ENCODE measurements at regions of chrX and their contacts with region 1.

Region 1: DNA sequence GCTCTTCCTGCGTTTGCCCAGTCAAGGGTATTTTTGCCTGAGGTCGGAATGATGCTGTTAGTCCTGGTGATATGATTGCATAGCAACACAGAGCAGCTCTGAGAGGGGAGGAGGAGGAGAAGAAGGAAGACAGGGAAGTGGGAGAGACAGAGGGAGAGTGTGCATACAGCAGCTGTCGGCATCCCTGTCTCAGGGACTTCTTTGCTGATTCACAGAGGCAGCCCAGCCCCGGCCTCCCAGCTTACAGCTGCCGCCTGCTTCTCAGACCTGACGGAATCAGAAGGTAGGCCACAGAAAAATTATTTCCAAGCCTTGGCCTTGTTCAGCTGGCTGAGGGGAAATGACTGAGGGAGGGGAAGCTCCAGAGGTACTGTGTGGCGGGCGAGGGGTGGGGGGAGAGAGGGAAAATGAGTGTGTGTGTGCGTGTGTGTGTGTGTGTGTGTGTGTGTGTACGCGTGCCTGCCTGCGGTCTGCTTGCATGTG is 319 bp downstream of the DRP2 start:
- DNase-seq: no peak
- H3K4me3 ChIP-seq: no peak overlapping the region
- H3K27ac ChIP-seq: no peak overlapping the region
- H3K4me1 ChIP-seq: no peaks in the 10 kb centered on the region
- H3K27me3 ChIP-seq: peaks cover 4% of the 10 kb centered on the region
- CTCF ChIP-seq: no peak

Region 2: DNA sequence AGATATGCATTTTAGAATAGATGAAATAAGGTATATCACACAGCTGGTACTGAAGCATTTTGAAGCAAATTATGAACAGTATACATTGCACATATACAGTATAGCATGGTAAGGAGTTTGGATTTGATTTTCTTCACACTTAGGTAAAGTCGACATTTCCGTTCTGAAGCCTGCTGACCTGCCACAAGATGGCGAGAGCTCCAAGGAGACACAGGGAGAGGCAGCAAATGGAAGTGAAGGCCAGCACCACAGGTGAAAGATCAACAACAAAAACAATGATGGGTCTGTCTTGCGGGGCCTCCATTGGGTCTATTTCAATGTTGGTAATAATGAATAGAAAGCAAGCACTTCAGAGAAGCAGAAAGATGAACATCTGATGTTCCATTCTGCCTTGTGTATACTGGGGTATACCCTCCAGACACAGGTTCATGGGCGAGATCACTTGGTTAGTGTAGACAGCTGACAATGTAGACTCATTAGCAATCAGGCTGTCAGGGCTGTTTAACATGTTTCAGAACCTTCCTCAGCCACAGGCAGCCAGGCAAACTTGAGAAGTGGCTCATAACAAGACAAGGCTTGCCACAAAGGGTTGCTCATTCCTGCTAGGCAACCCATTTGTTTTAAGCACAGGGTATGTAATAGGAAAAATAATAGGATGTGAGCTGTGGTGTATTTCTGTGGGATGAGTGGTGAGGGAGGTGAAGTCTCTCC is 324.4 kb before region 1 on chrX:
- CTCF ChIA-PET with region 1: no interaction called
- dilution Hi-C with region 1: no loop called
- in situ Hi-C with region 1: no loop called
- intact Hi-C with region 1: no loop called
- DNase-seq: peak; percentile 93
- H3K4me3 ChIP-seq: no peak overlapping the region
- H3K27ac ChIP-seq: peak overlapping the region; percentile 74
- H3K4me1 ChIP-seq: peaks cover 17% of the 10 kb centered on the region
- H3K27me3 ChIP-seq: peaks cover 2% of the 10 kb centered on the region
- CTCF ChIP-seq: peak; percentile 44 to 70

Region 3: GRCh38 chrX:101276238-101276637 is 56.3 kb after region 1 on chrX:
- CTCF ChIA-PET with region 1: no interaction called
- dilution Hi-C with region 1: no loop called
- in situ Hi-C with region 1: no loop called
- intact Hi-C with region 1: no loop called
- DNase-seq: no peak
- H3K4me3 ChIP-seq: no peak overlapping the region
- H3K27ac ChIP-seq: no peak overlapping the region
- H3K4me1 ChIP-seq: no peaks in the 10 kb centered on the region
- H3K27me3 ChIP-seq: no peaks in the 10 kb centered on the region
- CTCF ChIP-seq: no peak

Region 4: GRCh38 chrX:101485199-101485949 is 265.5 kb after region 1 on chrX and contains the start of gene ARMCX4:
- CTCF ChIA-PET with region 1: interaction called, 12 read pairs
- dilution Hi-C with region 1: no loop called
- in situ Hi-C with region 1: no loop called
- intact Hi-C with region 1: no loop called
- DNase-seq: peak; percentile 18
- H3K4me3 ChIP-seq: peak within 1 kb of the TSS in 2 of 3 experiments; percentile 31 to 32
- H3K27ac ChIP-seq: no peak within 1 kb of the TSS
- H3K4me1 ChIP-seq: no peaks in the 10 kb centered on the region
- H3K27me3 ChIP-seq: no peaks in the 10 kb centered on the region
- CTCF ChIP-seq: no peak
- total RNA-seq, gene ARMCX4: 1.8 to 3.5 TPM